Ovary (tissue), 10 donors: ENCODE measurements at regions of chr11 and their contacts with region 1.

Region 1: GRCh38 chr11:14300661-14301304 is 58.2 kb downstream of the RRAS2 start:
- DNase-seq: peak; percentile 31 to 63 (median 45)
- H3K4me3 ChIP-seq: no peak overlapping the region
- H3K27ac ChIP-seq: no peak overlapping the region
- H3K4me1 ChIP-seq: no peaks in the 10 kb centered on the region
- H3K27me3 ChIP-seq: no peaks in the 10 kb centered on the region
- CTCF ChIP-seq: peak; percentile 42 to 59 (median 42)
- EP300 ChIP-seq: no peak
- POLR2A ChIP-seq: no peak

Region 2: DNA sequence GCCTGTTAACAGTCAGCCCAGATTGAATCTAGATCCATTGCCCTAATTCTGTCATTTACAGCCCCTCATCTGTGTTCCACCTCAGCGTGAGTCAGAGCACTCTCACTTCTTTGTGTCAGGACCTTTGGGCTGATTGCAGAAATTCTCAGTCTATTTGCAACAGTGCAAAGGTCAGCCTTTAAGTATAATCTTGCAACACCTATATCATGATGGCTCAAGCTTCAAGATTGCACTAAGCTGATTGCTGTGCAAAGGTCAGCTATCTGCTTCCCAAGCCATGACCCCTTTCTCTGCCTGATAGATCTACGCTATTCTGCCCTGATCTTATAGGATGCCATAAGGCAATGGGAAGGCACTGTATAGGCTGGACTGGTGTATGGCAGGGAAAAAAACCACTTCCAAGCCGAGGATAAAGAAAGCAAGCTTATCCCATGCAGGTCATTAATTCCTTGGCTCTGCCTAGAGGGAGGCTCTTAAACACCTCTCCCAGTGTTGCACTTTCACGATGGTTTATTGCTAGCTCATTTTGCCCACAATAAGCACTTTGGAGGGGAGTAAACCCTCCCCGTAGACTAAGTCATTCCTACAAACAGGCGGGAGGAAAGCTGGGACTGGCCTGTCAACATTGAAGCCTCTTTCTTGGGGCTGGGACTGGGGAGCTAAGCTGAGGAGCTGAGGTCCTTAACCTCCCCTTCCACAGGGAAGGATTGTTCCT is 42.4 kb before region 1 on chr11:
- intact Hi-C with region 1: no loop called
- DNase-seq: no peak
- H3K4me3 ChIP-seq: no peak overlapping the region
- H3K27ac ChIP-seq: no peak overlapping the region
- H3K4me1 ChIP-seq: peaks cover 3% of the 10 kb centered on the region
- H3K27me3 ChIP-seq: no peaks in the 10 kb centered on the region
- CTCF ChIP-seq: no peak
- EP300 ChIP-seq: no peak
- POLR2A ChIP-seq: no peak

Region 3: GRCh38 chr11:14446701-14447169 is 146.0 kb after region 1 on chr11:
- intact Hi-C with region 1: loop called in 2 of 4 experiments (anchors 5 to 10 kb)
- DNase-seq: no peak
- H3K4me3 ChIP-seq: no peak overlapping the region
- H3K27ac ChIP-seq: no peak overlapping the region
- H3K4me1 ChIP-seq: no peaks in the 10 kb centered on the region
- H3K27me3 ChIP-seq: no peaks in the 10 kb centered on the region
- CTCF ChIP-seq: no peak
- EP300 ChIP-seq: no peak
- POLR2A ChIP-seq: no peak

Region 4: DNA sequence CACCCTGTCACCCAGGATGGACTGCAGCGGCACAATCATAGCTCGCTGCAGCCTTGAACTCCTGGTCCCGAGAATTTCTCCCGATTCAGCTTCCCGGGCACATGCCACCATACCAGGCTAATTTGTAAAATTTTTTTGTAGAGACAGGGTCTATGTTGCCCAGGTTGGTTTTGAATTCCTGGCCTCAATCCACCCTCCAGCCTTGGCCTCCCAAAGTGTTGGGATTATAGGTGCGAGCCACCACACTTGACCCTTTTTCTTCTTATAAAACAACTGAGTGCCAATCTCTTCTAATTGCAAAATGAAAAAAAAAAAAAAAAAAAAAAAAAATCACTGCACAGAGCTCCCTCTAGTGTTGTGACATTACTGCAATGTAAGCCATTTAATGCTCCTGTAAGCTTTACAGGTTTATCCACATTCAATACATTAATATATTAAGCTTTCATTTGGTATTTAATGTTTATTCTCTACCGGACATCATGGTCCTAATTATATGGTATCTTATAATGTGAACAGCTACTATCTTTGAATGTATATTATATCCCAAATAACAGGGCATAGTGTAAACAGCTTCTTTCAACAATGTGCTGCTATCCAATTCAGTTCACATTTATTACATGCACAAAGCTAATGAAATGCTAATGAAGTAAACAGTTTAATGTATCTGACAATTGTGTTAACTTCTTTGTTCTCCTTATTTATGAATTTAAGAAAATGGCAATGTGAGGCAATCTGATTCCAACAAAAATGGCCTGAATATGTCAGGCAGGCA is 154.3 kb after region 1 on chr11:
- intact Hi-C with region 1: loop called in 2 of 4 experiments (anchors 5 to 10 kb)
- DNase-seq: no peak
- H3K4me3 ChIP-seq: no peak overlapping the region
- H3K27ac ChIP-seq: no peak overlapping the region
- H3K4me1 ChIP-seq: no peaks in the 10 kb centered on the region
- H3K27me3 ChIP-seq: no peaks in the 10 kb centered on the region
- CTCF ChIP-seq: peak in 1 of 3 donors; percentile 32
- EP300 ChIP-seq: no peak
- POLR2A ChIP-seq: no peak